Spleen (tissue), 13 donors: ENCODE measurements at regions of chr11 and their contacts with region 1.

Region 1: DNA sequence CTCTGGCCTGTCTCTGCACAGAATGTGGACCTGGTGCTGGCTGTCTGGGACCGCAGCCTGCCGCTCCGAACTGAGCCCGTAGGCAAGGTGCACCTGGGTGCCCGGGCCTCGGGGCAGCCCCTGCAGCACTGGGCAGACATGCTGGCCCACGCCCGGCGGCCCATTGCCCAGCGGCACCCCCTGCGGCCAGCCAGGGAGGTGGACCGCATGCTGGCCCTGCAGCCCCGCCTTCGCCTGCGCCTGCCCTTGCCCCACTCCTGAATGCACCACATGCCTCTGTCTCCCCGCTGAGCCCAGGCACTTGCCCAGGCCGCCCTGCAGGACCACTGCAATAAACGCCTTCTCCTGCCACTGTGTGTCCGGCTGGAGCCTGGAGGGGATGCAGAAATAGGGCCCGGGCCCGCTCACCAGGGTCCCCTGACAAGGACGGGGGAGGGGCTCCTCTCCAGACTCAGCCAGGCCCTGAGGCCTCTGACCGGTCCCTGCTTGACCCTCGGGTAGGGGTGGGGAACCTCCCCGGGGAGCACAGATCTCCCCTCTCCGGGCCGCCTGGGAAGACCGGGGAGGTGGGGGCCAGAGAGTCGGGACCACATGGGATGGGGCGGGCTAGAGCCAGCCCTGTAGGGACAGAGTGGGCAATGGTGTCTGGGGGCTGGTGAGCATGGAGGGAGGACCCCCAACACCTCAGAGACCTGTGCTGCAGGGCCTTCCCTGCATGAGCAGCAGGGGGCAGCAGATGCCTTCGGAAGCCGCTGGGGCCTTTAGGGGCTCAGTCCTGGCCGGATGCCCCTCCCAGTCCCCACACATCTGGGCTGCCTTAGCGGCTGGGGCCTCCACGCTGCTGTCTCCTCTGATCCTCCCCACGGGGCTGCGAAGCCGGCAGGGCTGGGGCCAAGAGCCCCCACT is 1.4 kb upstream of the TNNI2 start:
- DNase-seq: peak; percentile 96
- H3K4me3 ChIP-seq: peak overlapping the region in 1 of 8 donors; percentile 32
- H3K27ac ChIP-seq: peak overlapping the region in 6 of 8 donors; percentile 1 to 94 (median 88)
- H3K4me1 ChIP-seq: peaks cover 26 to 65% (median 60%) of the 10 kb centered on the region in 6 donors
- H3K27me3 ChIP-seq: peaks cover 0 to 10% (median 0%) of the 10 kb centered on the region in 7 donors
- CTCF ChIP-seq: peak; percentile 82 to 98 (median 96)
- POLR2A ChIP-seq: no peak

Region 2: DNA sequence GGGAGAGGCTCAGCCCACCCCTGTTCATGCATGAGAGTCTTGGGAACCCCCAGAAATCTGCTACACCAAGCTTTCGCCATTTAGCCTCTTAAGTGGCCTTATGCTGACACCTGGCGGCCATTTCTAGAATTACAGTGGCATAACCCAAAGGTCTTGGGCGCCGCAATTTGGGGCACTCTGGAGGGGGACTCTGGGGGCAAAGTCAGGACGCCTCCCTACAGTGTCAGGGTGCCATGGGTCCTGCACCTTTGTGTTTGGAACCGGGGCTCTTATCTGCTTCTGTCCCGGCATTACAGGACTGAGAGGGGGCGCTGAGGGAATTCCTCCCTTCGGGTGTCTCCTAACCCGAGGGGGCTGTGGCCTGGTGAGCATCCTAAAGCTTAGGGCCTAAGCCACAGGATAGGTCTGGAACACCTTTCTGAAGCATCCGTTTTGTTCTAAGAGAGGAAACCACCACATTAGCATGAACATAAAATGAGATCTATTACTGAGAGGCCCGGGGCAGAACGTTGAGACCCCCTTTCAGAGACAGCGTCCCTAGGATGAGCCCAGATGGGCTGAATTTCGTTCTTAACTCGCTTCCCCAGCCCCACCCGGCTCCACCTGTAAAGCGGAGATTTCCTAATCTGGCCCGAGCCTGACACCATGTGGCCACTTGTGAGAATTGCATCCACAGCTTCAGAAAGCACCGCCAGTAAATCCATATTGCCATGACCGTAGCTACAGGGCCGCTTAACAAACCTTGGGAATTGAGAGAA is 314.3 kb after region 1 on chr11:
- intact Hi-C with region 1: loop called (anchors 5 kb)
- DNase-seq: peak; percentile 88
- H3K4me3 ChIP-seq: peak overlapping the region in 1 of 8 donors; percentile 40
- H3K27ac ChIP-seq: peak overlapping the region in 3 of 8 donors; percentile 8 to 41 (median 40)
- H3K4me1 ChIP-seq: peaks cover 7 to 13% (median 9%) of the 10 kb centered on the region in 6 donors
- H3K27me3 ChIP-seq: peaks cover 0 to 72% (median 30%) of the 10 kb centered on the region in 7 donors
- CTCF ChIP-seq: peak; percentile 62 to 92 (median 85)
- POLR2A ChIP-seq: no peak